CD4-positive, alpha-beta T cell (primary cell): ENCODE measurements at regions of chr1 and their contacts with region 1.

Region 1: DNA sequence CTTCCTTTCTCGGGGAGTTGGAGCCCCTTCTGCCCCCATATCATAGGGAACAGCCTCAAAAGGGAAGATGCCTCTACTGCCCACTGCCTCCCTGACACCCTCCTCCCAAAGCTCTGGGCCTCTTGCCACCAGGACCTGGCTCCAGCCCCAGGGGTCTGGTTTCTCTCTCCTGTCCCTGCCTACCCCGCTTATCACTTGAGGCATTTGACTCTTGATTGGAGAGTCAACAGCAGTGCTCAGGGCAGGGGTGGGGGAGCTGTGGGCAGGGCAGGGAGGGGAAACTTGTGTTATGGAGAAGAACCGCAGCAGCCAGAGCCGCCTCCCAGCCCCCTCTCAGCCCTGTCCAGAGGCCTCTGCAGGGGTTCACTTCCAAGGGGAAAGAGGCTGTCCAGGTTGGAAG is 573 bp downstream of the TRIM63 start:
- DNase-seq: no peak
- ATAC-seq: no peak
- H3K4me3 ChIP-seq: no peak overlapping the region
- H3K4me3 Mint-ChIP-seq: no peak overlapping the region
- H3K27ac ChIP-seq: no peak overlapping the region
- H3K27ac Mint-ChIP-seq: no peak overlapping the region
- H3K4me1 ChIP-seq: no peaks in the 10 kb centered on the region
- H3K4me1 Mint-ChIP-seq: no peaks in the 10 kb centered on the region
- H3K27me3 ChIP-seq: no peaks in the 10 kb centered on the region
- H3K27me3 Mint-ChIP-seq: peaks cover 5% of the 10 kb centered on the region
- CTCF ChIP-seq: no peak

Region 2: GRCh38 chr1:25073640-25074270 is 993.1 kb before region 1 on chr1:
- CTCF ChIA-PET with region 1: no interaction called
- POLR2A ChIA-PET with region 1: no interaction called
- intact Hi-C with region 1: loop called in 1 of 2 experiments (anchors 10 kb)
- DNase-seq: no peak
- ATAC-seq: no peak
- H3K4me3 ChIP-seq: no peak overlapping the region
- H3K4me3 Mint-ChIP-seq: no peak overlapping the region
- H3K27ac ChIP-seq: no peak overlapping the region
- H3K27ac Mint-ChIP-seq: no peak overlapping the region
- H3K4me1 ChIP-seq: no peaks in the 10 kb centered on the region
- H3K4me1 Mint-ChIP-seq: no peaks in the 10 kb centered on the region
- H3K27me3 ChIP-seq: no peaks in the 10 kb centered on the region
- H3K27me3 Mint-ChIP-seq: no peaks in the 10 kb centered on the region
- CTCF ChIP-seq: no peak

Region 3: GRCh38 chr1:26049531-26050247 is 17.2 kb before region 1 on chr1:
- CTCF ChIA-PET with region 1: no interaction called
- POLR2A ChIA-PET with region 1: no interaction called
- intact Hi-C with region 1: no loop called
- DNase-seq: no peak
- ATAC-seq: no peak
- H3K4me3 ChIP-seq: no peak overlapping the region
- H3K4me3 Mint-ChIP-seq: no peak overlapping the region
- H3K27ac ChIP-seq: no peak overlapping the region
- H3K27ac Mint-ChIP-seq: no peak overlapping the region
- H3K4me1 ChIP-seq: peaks cover 2% of the 10 kb centered on the region
- H3K4me1 Mint-ChIP-seq: peaks cover 6% of the 10 kb centered on the region
- H3K27me3 ChIP-seq: peaks cover 41 to 49% of the 10 kb centered on the region in 2 experiments
- H3K27me3 Mint-ChIP-seq: peaks cover 73% of the 10 kb centered on the region
- CTCF ChIP-seq: no peak